CD8-positive, alpha-beta T cell (primary cell): ENCODE measurements at regions of chr10 and their contacts with region 1.

Region 1: DNA sequence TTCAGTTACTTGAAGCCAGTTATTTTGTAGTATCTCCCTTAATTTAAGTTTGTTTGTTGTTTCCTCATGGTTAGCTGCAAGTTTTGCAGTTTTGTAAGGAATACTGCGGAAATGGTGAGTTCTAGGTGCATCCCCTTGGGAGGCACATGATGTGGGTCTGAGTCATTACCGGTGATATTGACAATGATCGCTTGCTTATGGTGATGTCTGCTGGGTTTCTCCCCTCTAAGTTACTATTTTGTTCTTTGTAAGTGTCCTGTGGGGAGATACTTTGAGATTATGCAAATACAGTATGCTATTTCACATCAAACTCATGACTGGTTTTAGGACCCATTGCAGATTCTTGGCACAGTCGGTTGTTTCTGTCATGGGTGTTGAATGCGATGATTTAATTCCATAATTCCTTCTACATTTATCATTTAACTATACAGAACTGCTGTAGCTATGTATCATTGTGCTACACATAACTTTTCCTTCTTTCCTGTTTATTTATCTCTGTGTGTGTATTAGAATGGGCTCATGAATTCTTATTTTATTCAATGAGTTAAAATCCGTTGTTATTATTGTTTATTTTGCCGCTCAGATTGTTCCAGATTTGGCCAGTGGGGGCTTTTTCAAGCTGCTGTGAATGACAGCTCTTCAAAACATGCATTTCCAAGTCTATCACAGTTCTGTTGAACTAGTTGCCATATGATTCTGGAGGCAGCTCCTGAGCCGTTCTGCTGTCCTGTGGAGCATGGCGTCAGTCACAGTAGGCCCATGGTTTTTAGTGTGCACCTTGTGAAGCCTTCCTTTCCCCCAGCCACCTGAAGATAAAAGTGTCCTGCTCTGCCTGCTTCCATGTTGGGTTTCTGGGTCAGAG is 18.4 kb downstream of the TSPAN14 start:
- DNase-seq: peak in 4 of 9 experiments; percentile 45 to 82 (median 60)
- ATAC-seq: peak; percentile 62
- H3K4me3 ChIP-seq: peak overlapping the region in 1 of 2 experiments; percentile 23
- H3K4me3 Mint-ChIP-seq: peak overlapping the region; percentile 60
- H3K27ac ChIP-seq: peak overlapping the region; percentile 16 to 81
- H3K27ac Mint-ChIP-seq: peak overlapping the region; percentile 97
- H3K4me1 ChIP-seq: peaks cover 83% of the 10 kb centered on the region
- H3K4me1 Mint-ChIP-seq: peaks cover 92% of the 10 kb centered on the region
- H3K27me3 ChIP-seq: no peaks in the 10 kb centered on the region
- H3K27me3 Mint-ChIP-seq: no peaks in the 10 kb centered on the region
- CTCF ChIP-seq: no peak

Region 2: DNA sequence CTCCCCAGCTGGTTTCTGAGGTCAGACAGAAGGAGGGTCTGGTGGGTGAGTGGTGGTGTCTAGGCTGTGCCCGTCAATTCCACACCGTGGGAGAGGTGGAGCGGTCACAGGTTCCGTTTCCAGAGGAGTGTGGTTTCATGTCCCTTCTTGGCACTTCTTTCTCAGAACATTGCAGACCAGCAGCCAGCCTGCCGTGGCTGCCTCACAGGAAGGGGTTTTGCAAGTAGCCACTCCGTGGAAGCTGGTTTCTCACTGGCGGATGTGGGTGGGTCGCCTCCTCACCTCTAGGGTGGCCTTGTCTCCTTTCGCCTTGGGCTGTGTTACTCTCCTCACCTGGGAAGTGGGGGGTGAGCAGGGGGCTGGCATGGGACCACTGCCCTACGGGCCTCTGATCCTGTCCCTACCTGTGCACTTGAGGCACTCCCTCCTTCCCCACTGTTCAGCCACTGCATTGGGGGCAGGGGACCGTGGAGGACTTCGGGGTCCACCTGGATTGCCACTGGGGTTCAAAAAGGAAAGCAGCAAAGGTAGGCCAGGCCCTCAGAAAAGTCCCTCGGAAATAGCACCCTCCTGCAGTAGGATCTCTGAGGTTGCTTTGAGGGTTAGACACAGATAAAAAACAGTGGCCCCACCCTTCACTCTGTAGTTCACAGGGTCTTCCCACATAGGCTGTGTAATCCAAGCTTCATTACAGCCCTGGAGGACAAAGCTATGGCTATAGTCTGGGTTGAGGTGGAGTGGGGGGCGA is 15.5 kb after region 1 on chr10:
- CTCF ChIA-PET with region 1: interaction called, 227 read pairs
- POLR2A ChIA-PET with region 1: interaction called, 122 read pairs
- intact Hi-C with region 1: loop called in 1 of 2 experiments (anchors 1 kb)
- DNase-seq: peak in 8 of 9 experiments; percentile 55 to 87 (median 74)
- ATAC-seq: peak; percentile 68
- H3K4me3 ChIP-seq: peak overlapping the region; percentile 15 to 29
- H3K4me3 Mint-ChIP-seq: peak overlapping the region; percentile 77
- H3K27ac ChIP-seq: peak overlapping the region; percentile 24 to 75
- H3K27ac Mint-ChIP-seq: peak overlapping the region; percentile 92
- H3K4me1 ChIP-seq: peaks cover 98% of the 10 kb centered on the region
- H3K4me1 Mint-ChIP-seq: peaks cover 96% of the 10 kb centered on the region
- H3K27me3 ChIP-seq: no peaks in the 10 kb centered on the region
- H3K27me3 Mint-ChIP-seq: no peaks in the 10 kb centered on the region
- CTCF ChIP-seq: no peak

Region 3: DNA sequence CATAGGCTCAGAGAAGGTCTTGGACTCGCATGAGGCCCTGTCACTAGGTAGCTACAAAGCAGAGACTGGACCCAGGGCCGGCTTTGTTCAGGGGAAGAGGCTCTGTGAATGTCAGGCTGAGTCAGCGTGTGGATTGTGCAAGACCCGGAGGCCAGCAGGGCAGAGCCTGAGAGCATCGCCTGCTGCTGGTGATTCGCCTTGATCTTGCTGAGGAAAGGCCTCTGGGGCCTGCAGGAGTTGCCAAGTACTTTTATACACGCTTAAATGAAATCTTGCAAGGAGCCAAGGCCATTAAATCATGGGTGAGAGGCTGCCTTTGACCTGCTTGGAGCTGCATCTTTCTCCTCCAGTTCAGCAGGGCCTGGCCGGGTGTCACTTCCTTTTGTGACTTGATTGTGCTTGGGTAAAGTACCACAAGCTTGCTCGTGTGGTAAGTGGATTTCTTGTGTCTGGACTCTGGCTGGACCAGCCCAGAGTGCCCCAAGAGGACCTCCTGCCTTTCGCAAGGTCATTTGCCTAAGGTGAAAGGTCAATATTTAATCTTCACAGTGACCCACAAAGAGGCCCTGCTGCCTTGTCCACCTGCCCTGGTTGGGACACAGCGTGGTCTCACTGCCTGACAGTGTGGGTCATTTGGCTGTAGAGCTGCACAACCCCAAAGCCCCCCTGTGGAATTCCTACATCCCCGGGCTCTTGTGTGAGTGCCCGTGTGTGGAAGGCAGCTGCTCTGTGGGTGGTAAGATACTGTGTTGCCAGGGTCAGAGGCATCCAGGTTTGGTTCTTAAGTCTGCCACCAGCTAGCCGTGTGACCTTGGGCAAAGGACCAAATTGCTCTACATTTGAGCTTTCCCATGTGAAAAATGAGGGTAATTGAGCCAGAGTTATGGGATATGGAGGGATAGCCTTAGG is 26.6 kb after region 1 on chr10:
- CTCF ChIA-PET with region 1: interaction called, 404 read pairs
- POLR2A ChIA-PET with region 1: interaction called, 80 read pairs
- intact Hi-C with region 1: no loop called
- DNase-seq: peak in 7 of 9 experiments; percentile 27 to 66 (median 55)
- ATAC-seq: peak; percentile 39
- H3K4me3 ChIP-seq: peak overlapping the region; percentile 12 to 29
- H3K4me3 Mint-ChIP-seq: peak overlapping the region; percentile 74
- H3K27ac ChIP-seq: peak overlapping the region; percentile 11 to 84
- H3K27ac Mint-ChIP-seq: peak overlapping the region; percentile 96
- H3K4me1 ChIP-seq: peaks cover 98% of the 10 kb centered on the region
- H3K4me1 Mint-ChIP-seq: peaks cover 97% of the 10 kb centered on the region
- H3K27me3 ChIP-seq: no peaks in the 10 kb centered on the region
- H3K27me3 Mint-ChIP-seq: no peaks in the 10 kb centered on the region
- CTCF ChIP-seq: no peak